ENCODE measurements at regions of chr2 and their contacts with region 1.

Region 1: DNA sequence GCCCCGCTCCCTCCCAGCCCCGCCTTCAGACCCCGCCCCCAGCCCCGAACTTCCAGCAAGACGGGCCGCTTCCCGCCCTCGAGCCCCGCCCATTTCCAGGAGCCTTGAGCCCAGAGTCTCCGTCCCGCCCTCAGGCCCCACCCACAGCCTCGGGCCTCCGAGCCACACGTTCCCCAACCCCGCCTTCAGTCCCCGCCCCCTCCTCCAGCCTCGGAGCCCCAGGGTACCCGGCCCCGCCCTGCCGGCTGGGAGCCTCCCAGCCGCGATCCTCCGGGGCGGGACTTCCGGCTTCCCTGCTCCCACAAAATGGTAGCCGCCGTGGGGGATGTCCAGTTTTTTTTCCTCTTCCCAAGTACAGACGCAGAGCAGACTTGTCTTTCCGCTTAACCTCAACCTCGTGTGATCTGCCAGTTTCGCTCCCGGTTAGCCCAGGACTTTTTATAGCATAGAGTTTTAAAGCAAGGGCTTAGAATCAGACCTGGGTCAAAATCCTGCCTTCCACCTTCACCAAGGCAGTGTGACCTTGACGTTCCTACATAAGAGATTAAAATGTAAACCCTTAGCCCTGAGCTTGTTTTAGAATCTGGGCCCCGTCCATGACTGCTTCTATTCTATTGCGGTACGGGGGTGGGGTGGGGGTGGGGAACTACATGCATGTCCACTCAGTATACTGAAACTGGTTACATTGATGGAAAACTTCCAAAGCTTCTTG is 435 bp upstream of the GPR155 start:
- DNase-seq: peak; percentile 97
- ATAC-seq: peak; percentile 87
- H3K4me3 ChIP-seq: peak overlapping the region; percentile 92
- H3K27ac ChIP-seq: peak overlapping the region; percentile 63
- H3K4me1 ChIP-seq: no peaks in the 10 kb centered on the region
- H3K27me3 ChIP-seq: no peaks in the 10 kb centered on the region
- CTCF ChIP-seq: no peak

Region 2: GRCh38 chr2:174610243-174610995 is 123.2 kb after region 1 on chr2:
- CTCF ChIA-PET with region 1: no interaction called
- POLR2A ChIA-PET with region 1: no interaction called
- intact Hi-C with region 1: loop called (anchors 5 kb)
- DNase-seq: no peak
- ATAC-seq: no peak
- H3K4me3 ChIP-seq: no peak overlapping the region
- H3K27ac ChIP-seq: no peak overlapping the region
- H3K4me1 ChIP-seq: peaks cover 36% of the 10 kb centered on the region
- H3K27me3 ChIP-seq: no peaks in the 10 kb centered on the region
- CTCF ChIP-seq: no peak

Region 3: DNA sequence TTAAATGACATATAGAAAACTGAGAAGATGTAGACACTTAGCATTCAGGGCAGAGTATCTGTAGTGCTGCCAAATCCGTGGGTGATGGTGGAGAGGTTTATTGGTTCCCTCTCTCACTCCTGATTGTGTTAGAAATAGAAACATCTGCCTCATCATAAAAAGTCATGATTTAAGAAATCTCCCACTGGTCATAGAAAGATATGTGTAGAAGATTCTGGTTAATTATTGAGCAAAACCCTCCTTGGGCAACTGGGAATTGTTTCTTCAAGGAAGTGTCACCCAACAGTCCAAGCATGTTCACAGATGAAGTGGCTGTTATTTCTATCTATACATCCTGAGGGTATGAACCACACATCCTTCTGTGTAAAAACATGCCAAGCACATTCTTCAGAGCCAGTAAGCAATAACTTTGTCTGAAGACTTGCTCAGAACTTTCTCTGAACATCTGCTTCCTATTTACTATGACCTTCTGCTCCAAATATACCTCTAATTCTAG is 310.6 kb after region 1 on chr2:
- CTCF ChIA-PET with region 1: no interaction called
- POLR2A ChIA-PET with region 1: no interaction called
- intact Hi-C with region 1: no loop called
- DNase-seq: no peak
- ATAC-seq: no peak
- H3K4me3 ChIP-seq: no peak overlapping the region
- H3K27ac ChIP-seq: no peak overlapping the region
- H3K4me1 ChIP-seq: no peaks in the 10 kb centered on the region
- H3K27me3 ChIP-seq: no peaks in the 10 kb centered on the region
- CTCF ChIP-seq: no peak

Region 4: DNA sequence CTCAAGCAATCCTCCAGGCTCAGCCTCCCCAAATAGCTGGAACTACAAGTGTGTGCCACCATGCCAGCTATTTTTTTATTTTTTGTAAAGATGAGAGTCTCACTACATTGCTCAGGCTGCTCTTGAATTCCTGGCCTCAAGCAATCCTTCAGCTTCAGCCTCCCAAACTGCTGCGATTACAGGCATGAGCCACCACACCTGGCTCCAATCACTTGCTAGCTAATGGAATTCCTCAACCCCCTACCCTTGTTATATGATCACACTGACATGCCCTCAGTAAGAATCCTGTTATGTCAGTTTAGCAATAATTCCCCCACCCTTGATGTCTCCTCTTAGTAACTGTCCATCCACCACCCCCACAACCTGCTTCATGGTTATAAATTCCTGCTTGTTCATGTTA is 505.6 kb after region 1 on chr2:
- CTCF ChIA-PET with region 1: no interaction called
- POLR2A ChIA-PET with region 1: no interaction called
- intact Hi-C with region 1: no loop called
- DNase-seq: no peak
- ATAC-seq: no peak
- H3K4me3 ChIP-seq: no peak overlapping the region
- H3K27ac ChIP-seq: no peak overlapping the region
- H3K4me1 ChIP-seq: no peaks in the 10 kb centered on the region
- H3K27me3 ChIP-seq: no peaks in the 10 kb centered on the region
- CTCF ChIP-seq: no peak